MCF 10A (cell line): ENCODE measurements at regions of chr11 and their contacts with region 1.

Region 1: DNA sequence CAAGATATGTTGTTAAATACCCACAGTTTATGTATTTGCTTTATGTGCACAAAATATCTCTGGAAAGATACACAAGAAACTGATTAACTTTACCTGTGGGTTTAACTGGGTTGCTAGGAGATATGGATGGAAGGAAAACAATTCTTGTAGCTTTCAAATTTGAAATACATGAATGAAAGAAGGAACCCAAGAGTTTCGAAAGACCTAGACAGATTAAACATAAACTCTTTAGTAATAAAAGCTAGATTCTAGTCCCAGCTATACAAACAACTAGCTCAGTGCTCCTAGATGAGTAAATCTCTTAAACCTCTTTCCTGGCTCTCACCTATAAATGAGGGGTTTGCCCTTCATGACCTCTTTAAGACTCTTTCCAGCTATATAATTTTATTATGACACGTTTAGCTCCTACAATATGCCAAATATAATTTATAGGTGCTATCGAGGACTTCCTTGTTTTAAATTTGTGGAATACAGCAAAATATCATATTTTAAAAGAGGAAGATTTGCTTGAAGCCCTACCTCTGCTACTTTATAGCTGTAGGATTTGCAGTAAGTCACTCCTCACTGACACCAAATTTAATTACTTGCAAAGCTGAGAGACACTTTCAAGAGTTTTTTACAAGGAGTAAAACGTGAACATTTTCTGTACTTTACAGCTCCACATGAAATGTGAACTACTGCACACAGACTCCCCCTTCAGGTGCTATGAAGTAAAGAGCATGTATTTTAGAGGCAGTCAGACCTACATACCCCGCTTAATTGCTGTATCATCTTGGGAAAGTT is 50.7 kb downstream of the RRAS2 start:
- DNase-seq: peak; percentile 65
- H3K4me3 Mint-ChIP-seq: no peak overlapping the region
- H3K27ac Mint-ChIP-seq: no peak overlapping the region
- H3K4me1 Mint-ChIP-seq: peaks cover 2% of the 10 kb centered on the region
- H3K27me3 Mint-ChIP-seq: no peaks in the 10 kb centered on the region
- CTCF ChIP-seq: peak; percentile 42

Region 2: DNA sequence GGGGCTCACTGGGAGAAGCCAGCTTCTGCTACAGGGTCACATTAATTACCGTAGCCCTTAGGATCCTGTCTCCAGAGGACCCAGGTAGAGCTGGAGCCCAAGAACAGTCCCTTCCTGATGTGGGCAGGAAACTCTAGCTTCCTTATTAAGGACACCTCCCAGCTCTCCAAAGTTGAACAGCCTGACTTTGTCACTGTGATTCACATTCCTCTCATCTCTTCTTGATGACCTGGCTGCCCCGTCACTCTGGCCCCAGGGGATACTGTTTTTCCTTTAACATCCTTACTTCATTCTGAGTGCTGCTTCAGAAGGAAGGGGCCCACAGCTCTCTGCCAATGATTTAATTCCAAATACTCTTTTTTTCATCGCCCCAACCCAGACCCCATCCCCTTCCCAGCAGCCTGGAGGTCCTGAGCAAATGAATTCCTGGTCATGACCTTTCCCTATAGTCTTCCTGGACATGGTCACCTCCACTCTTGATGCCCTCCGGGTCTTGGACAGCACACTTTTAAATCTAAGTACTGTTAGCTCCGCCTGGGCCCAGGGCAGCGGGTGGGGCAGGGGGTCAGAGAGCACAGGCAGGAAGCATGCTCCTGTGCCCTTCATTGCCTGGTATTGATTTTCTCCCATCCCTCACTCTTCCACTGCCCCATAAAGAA is 368.2 kb before region 1 on chr11:
- CTCF ChIA-PET with region 1: no interaction called
- POLR2A ChIA-PET with region 1: no interaction called
- intact Hi-C with region 1: no loop called
- DNase-seq: peak; percentile 47
- H3K4me3 Mint-ChIP-seq: no peak overlapping the region
- H3K27ac Mint-ChIP-seq: peak overlapping the region; percentile 12
- H3K4me1 Mint-ChIP-seq: peaks cover 22% of the 10 kb centered on the region
- H3K27me3 Mint-ChIP-seq: no peaks in the 10 kb centered on the region
- CTCF ChIP-seq: no peak

Region 3: GRCh38 chr11:14320020-14320419 is 11.7 kb after region 1 on chr11:
- CTCF ChIA-PET with region 1: interaction called, 27 read pairs
- POLR2A ChIA-PET with region 1: interaction called, 6 read pairs
- intact Hi-C with region 1: no loop called
- DNase-seq: no peak
- H3K4me3 Mint-ChIP-seq: no peak overlapping the region
- H3K27ac Mint-ChIP-seq: no peak overlapping the region
- H3K4me1 Mint-ChIP-seq: peaks cover 36% of the 10 kb centered on the region
- H3K27me3 Mint-ChIP-seq: no peaks in the 10 kb centered on the region
- CTCF ChIP-seq: no peak

Region 4: DNA sequence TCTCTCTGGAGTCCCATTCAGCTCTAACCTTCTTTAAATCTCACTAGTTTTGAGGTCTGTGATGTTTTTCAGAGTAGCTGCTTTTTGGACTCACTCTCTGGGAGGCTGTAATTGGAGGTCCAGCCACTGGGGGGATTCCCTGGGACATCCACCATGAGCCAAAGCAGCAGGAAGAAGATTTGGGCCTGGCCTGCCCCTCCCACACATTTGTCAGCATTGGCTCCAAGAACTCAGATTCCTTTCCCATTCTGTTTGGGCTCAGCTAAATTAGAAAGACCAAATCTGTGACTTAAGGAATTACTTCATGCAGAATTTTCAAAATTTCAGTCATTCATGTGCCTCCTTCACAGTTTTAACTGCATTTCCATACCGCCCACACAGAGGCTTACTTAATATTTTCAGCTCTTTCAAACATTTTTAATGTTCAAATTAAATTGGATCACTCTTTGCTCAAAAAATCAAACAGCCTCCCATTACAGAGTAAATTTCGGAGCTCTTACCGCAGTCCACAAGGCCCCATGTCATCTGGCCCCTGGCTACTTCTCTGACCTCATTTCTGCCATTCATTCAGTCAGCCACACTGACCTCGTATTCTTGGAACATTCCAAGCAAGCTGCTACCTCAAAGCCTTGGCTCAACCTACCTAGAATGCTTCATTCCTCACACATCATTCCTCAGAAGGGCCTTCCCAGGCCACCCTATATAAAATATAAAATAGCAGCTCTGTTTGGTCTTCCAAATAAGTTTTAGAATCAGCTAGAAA is 105.2 kb after region 1 on chr11:
- CTCF ChIA-PET with region 1: interaction called, 316 read pairs
- POLR2A ChIA-PET with region 1: interaction called, 6 read pairs
- intact Hi-C with region 1: no loop called
- DNase-seq: peak; percentile 47
- H3K4me3 Mint-ChIP-seq: no peak overlapping the region
- H3K27ac Mint-ChIP-seq: no peak overlapping the region
- H3K4me1 Mint-ChIP-seq: peaks cover 60% of the 10 kb centered on the region
- H3K27me3 Mint-ChIP-seq: no peaks in the 10 kb centered on the region
- CTCF ChIP-seq: no peak